ENCODE measurements at regions of chr7 and their contacts with region 1.

Region 1: GRCh38 chr7:142811154-142811737 is 40.5 kb downstream of the PRSS2 start:
- DNase-seq: peak; percentile 59
- H3K4me3 ChIP-seq: no peak overlapping the region; a peak in 1 of 4 replicates
- H3K27ac ChIP-seq: no peak overlapping the region
- H3K4me1 ChIP-seq: peaks cover 27 to 33% of the 10 kb centered on the region in 2 experiments
- H3K27me3 ChIP-seq: peaks cover 10% of the 10 kb centered on the region; the same call in 1 of the 2 replicates
- CTCF ChIP-seq: peak; percentile 89
- EP300 ChIP-seq: no peak
- RAD21 ChIP-seq: peak; percentile 76

Region 2: DNA sequence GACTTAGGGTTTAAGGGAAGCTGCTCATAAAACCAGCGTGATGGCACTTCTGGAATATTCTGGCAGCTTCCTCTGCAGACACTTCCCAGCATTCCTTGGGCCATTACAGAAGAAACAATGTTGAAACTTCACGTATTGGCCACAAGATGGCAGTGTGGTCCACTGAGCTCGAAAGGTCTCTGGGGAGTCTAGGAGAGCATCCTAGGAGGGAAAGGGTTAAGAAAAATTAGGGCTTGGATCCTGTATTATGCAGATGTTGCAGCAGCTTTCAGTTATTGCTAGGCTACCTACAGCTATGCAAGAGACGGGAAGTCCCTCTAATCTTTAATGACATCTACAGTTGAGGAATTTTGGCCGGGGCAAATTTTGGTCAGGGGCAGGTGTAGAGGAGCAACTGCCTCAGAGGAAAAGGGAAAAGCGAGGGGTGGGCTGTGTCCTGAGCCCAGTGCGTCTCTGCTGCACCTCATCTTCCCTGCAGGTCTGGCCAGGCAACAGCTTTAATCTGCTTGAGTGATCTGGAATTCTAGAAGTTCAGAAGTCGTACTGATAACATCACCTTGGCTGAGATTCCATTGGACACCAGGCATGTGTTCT is 332.7 kb before region 1 on chr7:
- CTCF ChIA-PET with region 1: interaction called, 12 read pairs
- POLR2A ChIA-PET with region 1: no interaction called
- DNase-seq: peak; percentile 52
- H3K4me3 ChIP-seq: no peak overlapping the region
- H3K27ac ChIP-seq: no peak overlapping the region
- H3K4me1 ChIP-seq: peaks cover 7 to 13% of the 10 kb centered on the region in 2 experiments; a peak in 2 of 4 replicates
- H3K27me3 ChIP-seq: no peaks in the 10 kb centered on the region
- CTCF ChIP-seq: peak; percentile 89
- EP300 ChIP-seq: peak in 1 of 2 experiments; percentile 56; a peak in 2 of 4 replicates
- RAD21 ChIP-seq: peak; percentile 71

Region 3: GRCh38 chr7:142516038-142516501 is 295.2 kb before region 1 on chr7:
- CTCF ChIA-PET with region 1: interaction called, 10 read pairs
- POLR2A ChIA-PET with region 1: no interaction called
- DNase-seq: peak; percentile 69
- H3K4me3 ChIP-seq: peak overlapping the region in 1 of 2 experiments; percentile 20; a peak in 1 of 4 replicates
- H3K27ac ChIP-seq: no peak overlapping the region; a peak in 1 of 4 replicates
- H3K4me1 ChIP-seq: peaks cover 0 to 18% of the 10 kb centered on the region in 2 experiments; a peak in 2 of 4 replicates
- H3K27me3 ChIP-seq: peaks cover 33% of the 10 kb centered on the region
- CTCF ChIP-seq: peak; percentile 96
- EP300 ChIP-seq: no peak
- RAD21 ChIP-seq: peak; percentile 85

Region 4: GRCh38 chr7:142749218-142749993 is 61.8 kb before region 1 on chr7 and contains the start of gene PRSS1:
- CTCF ChIA-PET with region 1: interaction called, 10 read pairs
- POLR2A ChIA-PET with region 1: no interaction called
- DNase-seq: no peak
- H3K4me3 ChIP-seq: no peak within 1 kb of the TSS
- H3K27ac ChIP-seq: no peak within 1 kb of the TSS
- H3K4me1 ChIP-seq: peaks cover 0 to 10% of the 10 kb centered on the region in 2 experiments; a peak in 1 of 4 replicates
- H3K27me3 ChIP-seq: peaks cover 23% of the 10 kb centered on the region; the same call in 1 of the 2 replicates
- CTCF ChIP-seq: no peak
- EP300 ChIP-seq: no peak
- RAD21 ChIP-seq: no peak
- polyA plus RNA-seq, gene PRSS1: not detected in 2 replicates

Region 5: DNA sequence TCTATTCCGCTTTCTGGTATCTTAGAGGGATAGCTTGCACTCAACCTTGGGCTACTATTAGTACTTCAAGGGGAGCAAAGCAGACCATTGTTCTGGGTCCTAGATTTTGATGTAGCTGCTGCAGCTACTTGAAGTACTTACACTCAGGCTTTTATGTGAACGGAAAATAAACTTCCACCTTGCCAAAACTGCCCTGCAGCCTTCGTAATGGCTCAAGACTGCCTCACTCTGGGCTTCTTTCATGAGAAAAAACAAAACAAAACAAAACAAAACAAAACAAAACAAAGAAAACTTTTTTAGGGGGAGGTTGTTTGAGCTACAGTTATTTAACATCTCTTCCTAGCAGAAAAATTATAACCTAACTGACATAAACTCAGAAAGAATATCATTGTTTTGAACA is 24.2 kb after region 1 on chr7:
- CTCF ChIA-PET with region 1: interaction called, 11 read pairs
- POLR2A ChIA-PET with region 1: no interaction called
- DNase-seq: no peak
- H3K4me3 ChIP-seq: no peak overlapping the region
- H3K27ac ChIP-seq: no peak overlapping the region
- H3K4me1 ChIP-seq: no peaks in the 10 kb centered on the region
- H3K27me3 ChIP-seq: no peaks in the 10 kb centered on the region; the same call in 1 of the 2 replicates
- CTCF ChIP-seq: no peak
- EP300 ChIP-seq: no peak
- RAD21 ChIP-seq: no peak

Region 6: DNA sequence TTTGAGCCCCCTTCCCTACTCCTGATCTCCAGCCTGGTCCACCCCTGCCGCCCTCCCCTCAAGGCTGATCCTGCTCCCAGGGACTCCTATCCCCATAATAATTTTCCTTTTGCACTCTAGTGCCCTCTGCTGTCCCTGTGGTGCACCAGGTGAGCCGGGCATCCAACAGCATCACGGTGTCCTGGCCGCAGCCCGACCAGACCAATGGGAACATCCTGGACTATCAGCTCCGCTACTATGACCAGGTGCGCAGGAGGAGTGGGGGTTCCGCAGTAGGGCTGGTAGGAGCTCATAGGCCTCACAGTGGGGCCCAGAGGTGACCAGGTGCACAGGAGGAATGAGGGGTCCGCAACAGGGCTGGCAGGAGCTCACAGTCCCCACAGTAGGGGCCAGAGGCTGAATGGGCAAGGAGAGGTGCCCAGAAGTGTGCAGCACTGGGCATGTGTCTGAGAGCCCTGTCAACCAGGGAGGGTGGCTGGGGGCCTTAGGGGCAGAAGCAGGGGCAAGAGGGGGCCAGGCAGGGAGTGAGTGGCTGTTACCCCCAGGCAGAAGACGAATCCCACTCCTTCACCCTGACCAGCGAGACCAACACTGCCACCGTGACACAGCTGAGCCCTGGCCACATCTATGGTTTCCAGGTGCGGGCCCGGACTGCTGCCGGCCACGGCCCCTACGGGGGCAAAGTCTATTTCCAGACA is 55.3 kb after region 1 on chr7:
- CTCF ChIA-PET with region 1: interaction called, 14 read pairs
- POLR2A ChIA-PET with region 1: no interaction called
- DNase-seq: peak; percentile 88
- H3K4me3 ChIP-seq: no peak overlapping the region
- H3K27ac ChIP-seq: no peak overlapping the region
- H3K4me1 ChIP-seq: no peaks in the 10 kb centered on the region
- H3K27me3 ChIP-seq: peaks cover 11% of the 10 kb centered on the region
- CTCF ChIP-seq: peak; percentile 77
- EP300 ChIP-seq: no peak
- RAD21 ChIP-seq: peak; percentile 69

Region 7: GRCh38 chr7:142927085-142927745 is 116.0 kb after region 1 on chr7:
- CTCF ChIA-PET with region 1: no interaction called
- POLR2A ChIA-PET with region 1: no interaction called
- DNase-seq: no peak
- H3K4me3 ChIP-seq: no peak overlapping the region
- H3K27ac ChIP-seq: no peak overlapping the region
- H3K4me1 ChIP-seq: no peaks in the 10 kb centered on the region
- H3K27me3 ChIP-seq: peaks cover 13% of the 10 kb centered on the region; the same call in 1 of the 2 replicates
- CTCF ChIP-seq: no peak
- EP300 ChIP-seq: no peak
- RAD21 ChIP-seq: no peak